HepG2 (cell line): ENCODE measurements at regions of chr1 and their contacts with region 1.

Region 1: DNA sequence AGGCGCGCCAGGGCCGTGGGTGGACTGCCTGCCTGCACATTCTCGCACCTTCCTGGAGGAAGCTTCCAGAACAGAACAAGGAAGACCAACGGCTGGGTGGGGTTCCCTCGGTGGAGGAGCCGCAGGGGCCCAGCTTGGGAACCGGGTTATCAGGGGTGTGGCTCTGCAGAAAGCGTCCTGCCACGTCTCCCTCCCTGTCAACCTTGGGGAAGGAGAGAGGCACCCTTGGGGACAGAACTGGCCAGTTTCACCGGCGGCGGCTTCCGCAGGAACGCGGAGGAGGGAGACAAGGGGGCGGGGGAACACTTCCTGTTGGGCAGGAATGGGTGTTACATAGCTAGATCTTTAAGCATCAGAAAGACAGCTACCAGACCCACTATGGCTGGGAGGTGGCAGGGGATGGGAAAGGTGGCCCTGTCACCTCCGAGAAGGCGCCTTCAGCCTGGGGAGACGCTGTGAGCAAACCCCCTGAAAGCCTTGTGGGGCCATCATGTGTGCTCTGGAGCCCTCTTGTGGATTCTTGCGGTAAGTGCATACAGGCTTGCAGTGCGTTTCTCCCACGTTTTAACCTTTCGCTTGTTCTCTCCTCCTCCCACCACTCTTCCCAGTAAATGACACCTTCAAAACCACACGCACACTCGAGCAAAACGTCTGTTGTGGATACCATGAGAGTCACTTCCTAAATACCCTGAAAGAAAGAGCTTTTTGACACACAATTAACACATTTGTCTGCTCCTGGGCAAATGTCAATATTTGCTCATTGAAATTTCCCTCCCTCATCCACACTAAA is 3.8 kb upstream of the PLEKHA6 start:
- DNase-seq: peak; percentile 50
- ATAC-seq: peak; percentile 64
- H3K4me3 ChIP-seq: no peak overlapping the region
- H3K27ac ChIP-seq: no peak overlapping the region
- H3K4me1 ChIP-seq: peaks cover 20% of the 10 kb centered on the region
- H3K27me3 ChIP-seq: no peaks in the 10 kb centered on the region
- CTCF ChIP-seq: peak; percentile 97
- EP300 ChIP-seq: no peak
- POLR2A ChIP-seq: no peak
- RAD21 ChIP-seq: peak; percentile 95

Region 2: DNA sequence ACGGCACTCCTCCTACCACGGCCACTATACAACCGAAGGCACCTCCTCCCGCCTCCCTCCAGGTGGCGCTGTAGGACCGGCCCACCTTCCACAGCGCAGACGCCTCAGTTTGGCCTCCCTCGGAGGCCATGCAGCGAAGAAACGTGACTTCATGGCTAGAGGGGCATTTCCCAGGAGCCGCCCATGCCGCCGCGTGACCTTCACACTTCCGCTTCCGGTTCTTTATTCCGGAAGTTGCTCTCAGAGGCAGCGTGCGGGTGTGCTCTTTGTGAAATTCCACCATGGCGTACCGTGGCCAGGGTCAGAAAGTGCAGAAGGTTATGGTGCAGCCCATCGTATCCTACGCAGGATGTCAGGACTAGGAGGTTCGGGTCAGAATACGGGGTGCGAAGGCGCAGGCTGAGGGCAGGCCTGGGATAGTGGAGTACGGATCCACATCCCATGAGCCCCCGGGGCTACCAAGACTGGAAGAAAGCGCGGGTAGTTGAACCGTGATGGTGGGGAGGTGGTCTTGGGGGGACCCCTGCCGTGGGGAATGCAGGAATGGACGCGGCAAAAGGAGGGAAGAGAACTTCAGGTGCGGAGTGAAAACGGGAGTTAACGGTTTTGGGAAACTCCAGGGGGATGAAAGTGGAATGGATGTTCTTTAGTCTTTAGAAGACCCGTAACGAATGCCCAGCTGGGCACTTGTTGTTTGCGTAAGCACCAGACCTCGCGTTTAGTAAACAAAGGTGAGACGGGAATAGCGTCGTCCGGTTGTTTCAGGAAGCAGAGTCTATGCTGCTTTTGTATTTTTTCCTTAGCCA is 501.9 kb before region 1 on chr1 and contains the start of gene SNRPE:
- CTCF ChIA-PET with region 1: no interaction called
- POLR2A ChIA-PET with region 1: no interaction called
- in situ Hi-C with region 1: loop called (anchors 25 kb)
- intact Hi-C with region 1: no loop called
- DNase-seq: peak; percentile 96
- ATAC-seq: peak; percentile 96
- H3K4me3 ChIP-seq: peak within 1 kb of the TSS; percentile 87 to 90 (median 90)
- H3K27ac ChIP-seq: peak within 1 kb of the TSS; percentile 85
- H3K4me1 ChIP-seq: peaks cover 27% of the 10 kb centered on the region
- H3K27me3 ChIP-seq: no peaks in the 10 kb centered on the region; a peak in 1 of 5 replicates
- CTCF ChIP-seq: peak; percentile 97
- EP300 ChIP-seq: peak in 1 of 2 experiments; percentile 48; a peak in 1 of 4 replicates
- POLR2A ChIP-seq: peak; percentile 71 to 92
- RAD21 ChIP-seq: peak; percentile 96
- total RNA-seq, gene SNRPE: 281 and 397 TPM in 2 replicates

Region 3: GRCh38 chr1:204213668-204214662 is 149.6 kb before region 1 on chr1 and contains the start of gene GOLT1A:
- CTCF ChIA-PET with region 1: interaction called, 29 read pairs
- POLR2A ChIA-PET with region 1: interaction called, 3 read pairs
- in situ Hi-C with region 1: loop called (anchors 5 kb)
- intact Hi-C with region 1: loop called (anchors 1 kb)
- DNase-seq: peak; percentile 90
- ATAC-seq: peak; percentile 90
- H3K4me3 ChIP-seq: peak within 1 kb of the TSS; percentile 57 to 84 (median 67)
- H3K27ac ChIP-seq: peak within 1 kb of the TSS; percentile 66
- H3K4me1 ChIP-seq: peaks cover 41% of the 10 kb centered on the region
- H3K27me3 ChIP-seq: no peaks in the 10 kb centered on the region; a peak in 1 of 5 replicates
- CTCF ChIP-seq: peak; percentile 93
- EP300 ChIP-seq: peak; percentile 10 to 48; a peak in 1 of 4 replicates
- POLR2A ChIP-seq: peak; percentile 35 to 83; a peak in 3 of 4 replicates
- RAD21 ChIP-seq: peak; percentile 81
- total RNA-seq, gene GOLT1A: 19.4 and 28.0 TPM in 2 replicates

Region 4: GRCh38 chr1:204257954-204258752 is 105.4 kb before region 1 on chr1:
- CTCF ChIA-PET with region 1: interaction called, 25 read pairs
- POLR2A ChIA-PET with region 1: no interaction called
- in situ Hi-C with region 1: loop called (anchors 5 kb)
- intact Hi-C with region 1: loop called (anchors 1 kb)
- DNase-seq: peak; percentile 42
- ATAC-seq: peak; percentile 67
- H3K4me3 ChIP-seq: no peak overlapping the region
- H3K27ac ChIP-seq: no peak overlapping the region
- H3K4me1 ChIP-seq: peaks cover 38% of the 10 kb centered on the region
- H3K27me3 ChIP-seq: no peaks in the 10 kb centered on the region
- CTCF ChIP-seq: peak; percentile 85
- EP300 ChIP-seq: no peak
- POLR2A ChIP-seq: no peak
- RAD21 ChIP-seq: peak; percentile 83

Region 5: GRCh38 chr1:204296431-204296988 is 67.0 kb before region 1 on chr1:
- CTCF ChIA-PET with region 1: no interaction called
- POLR2A ChIA-PET with region 1: no interaction called
- in situ Hi-C with region 1: no loop called
- intact Hi-C with region 1: no loop called
- DNase-seq: peak; percentile 41
- ATAC-seq: peak; percentile 76
- H3K4me3 ChIP-seq: peak overlapping the region in 2 of 3 experiments; percentile 38 to 65; a peak in 4 of 6 replicates
- H3K27ac ChIP-seq: peak overlapping the region; percentile 64
- H3K4me1 ChIP-seq: peaks cover 63% of the 10 kb centered on the region
- H3K27me3 ChIP-seq: no peaks in the 10 kb centered on the region
- CTCF ChIP-seq: peak; percentile 77
- EP300 ChIP-seq: no peak
- POLR2A ChIP-seq: no peak
- RAD21 ChIP-seq: no peak

Region 6: GRCh38 chr1:204319491-204319907 is 44.0 kb before region 1 on chr1:
- CTCF ChIA-PET with region 1: no interaction called
- POLR2A ChIA-PET with region 1: no interaction called
- in situ Hi-C with region 1: no loop called
- intact Hi-C with region 1: no loop called
- DNase-seq: no peak
- ATAC-seq: no peak
- H3K4me3 ChIP-seq: no peak overlapping the region
- H3K27ac ChIP-seq: no peak overlapping the region
- H3K4me1 ChIP-seq: peaks cover 6% of the 10 kb centered on the region
- H3K27me3 ChIP-seq: no peaks in the 10 kb centered on the region
- CTCF ChIP-seq: no peak
- EP300 ChIP-seq: no peak
- POLR2A ChIP-seq: no peak
- RAD21 ChIP-seq: no peak

Region 7: GRCh38 chr1:204398217-204399081 is 34.9 kb after region 1 on chr1:
- CTCF ChIA-PET with region 1: interaction called, 6 read pairs
- POLR2A ChIA-PET with region 1: no interaction called
- in situ Hi-C with region 1: no loop called
- intact Hi-C with region 1: loop called (anchors 1 kb)
- DNase-seq: peak; percentile 94
- ATAC-seq: peak; percentile 100
- H3K4me3 ChIP-seq: no peak overlapping the region
- H3K27ac ChIP-seq: peak overlapping the region; percentile 13
- H3K4me1 ChIP-seq: no peaks in the 10 kb centered on the region
- H3K27me3 ChIP-seq: no peaks in the 10 kb centered on the region
- CTCF ChIP-seq: peak; percentile 87
- EP300 ChIP-seq: 0 out of 4 replicates have a peak, but pooled peaks of 1 of the 2 experiments have one; percentile 7
- POLR2A ChIP-seq: no peak
- RAD21 ChIP-seq: peak; percentile 82